Caco-2 (cell line): ENCODE measurements at regions of chr6 and their contacts with region 1.

Region 1: GRCh38 chr6:52284460-52285176 is at the start of gene MCM3:
- DNase-seq: peak; percentile 97 to 99
- H3K4me3 ChIP-seq: peak within 1 kb of the TSS; percentile 87
- H3K4me3 Mint-ChIP-seq: no peak within 1 kb of the TSS
- H3K27ac Mint-ChIP-seq: no peak within 1 kb of the TSS
- H3K4me1 ChIP-seq: 0 out of 2 replicates have a peak, but pooled peaks cover 6% of the 10 kb centered on the region
- H3K4me1 Mint-ChIP-seq: no peaks in the 10 kb centered on the region
- H3K27me3 ChIP-seq: no peaks in the 10 kb centered on the region
- H3K27me3 Mint-ChIP-seq: no peaks in the 10 kb centered on the region
- CTCF ChIP-seq: no peak
- total RNA-seq, gene MCM3: 151 and 152 TPM in 2 replicates

Region 2: DNA sequence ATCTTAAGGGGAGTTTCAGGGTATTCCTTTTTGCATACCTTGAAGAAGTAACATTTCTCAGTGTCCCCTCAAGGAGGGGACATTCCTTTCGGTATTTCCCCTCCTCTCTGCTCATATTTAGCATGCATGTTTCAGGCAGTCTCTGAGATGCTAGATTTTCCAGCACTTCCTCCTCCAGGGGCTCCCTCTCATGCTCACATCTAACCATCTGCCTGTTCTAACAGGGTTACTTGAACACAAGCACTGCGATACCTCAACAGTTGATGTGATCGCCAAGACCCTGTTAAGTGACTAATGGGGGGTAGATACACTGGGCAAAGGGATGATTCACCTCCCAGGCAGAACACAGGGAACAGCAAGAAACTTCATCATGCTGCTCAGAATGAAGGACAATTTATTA is 12.8 kb after region 1 on chr6:
- CTCF ChIA-PET with region 1: interaction called, 3 read pairs
- POLR2A ChIA-PET with region 1: interaction called, 3 read pairs
- intact Hi-C with region 1: loop called (anchors 1 kb)
- DNase-seq: no peak
- H3K4me3 ChIP-seq: no peak overlapping the region
- H3K4me3 Mint-ChIP-seq: no peak overlapping the region
- H3K27ac Mint-ChIP-seq: peak overlapping the region; percentile 11
- H3K4me1 ChIP-seq: no peaks in the 10 kb centered on the region
- H3K4me1 Mint-ChIP-seq: peaks cover 15% of the 10 kb centered on the region
- H3K27me3 ChIP-seq: no peaks in the 10 kb centered on the region
- H3K27me3 Mint-ChIP-seq: no peaks in the 10 kb centered on the region
- CTCF ChIP-seq: no peak

Region 3: GRCh38 chr6:52325695-52326441 is 41.2 kb after region 1 on chr6:
- CTCF ChIA-PET with region 1: no interaction called
- POLR2A ChIA-PET with region 1: interaction called, 6 read pairs
- intact Hi-C with region 1: loop called (anchors 1 kb)
- DNase-seq: peak; percentile 85 to 91
- H3K4me3 ChIP-seq: no peak overlapping the region
- H3K4me3 Mint-ChIP-seq: peak overlapping the region; percentile 28
- H3K27ac Mint-ChIP-seq: peak overlapping the region; percentile 88
- H3K4me1 ChIP-seq: peaks cover 62% of the 10 kb centered on the region
- H3K4me1 Mint-ChIP-seq: peaks cover 63% of the 10 kb centered on the region
- H3K27me3 ChIP-seq: no peaks in the 10 kb centered on the region
- H3K27me3 Mint-ChIP-seq: no peaks in the 10 kb centered on the region
- CTCF ChIP-seq: no peak

Region 4: GRCh38 chr6:52361945-52362442 is 77.4 kb after region 1 on chr6 and contains the start of gene PAQR8:
- CTCF ChIA-PET with region 1: interaction called, 4 read pairs
- POLR2A ChIA-PET with region 1: interaction called, 8 read pairs
- intact Hi-C with region 1: loop called (anchors 1 kb)
- DNase-seq: peak; percentile 47 to 81
- H3K4me3 ChIP-seq: peak within 1 kb of the TSS; percentile 93
- H3K4me3 Mint-ChIP-seq: peak within 1 kb of the TSS; percentile 74
- H3K27ac Mint-ChIP-seq: peak within 1 kb of the TSS; percentile 75
- H3K4me1 ChIP-seq: peaks cover 26% of the 10 kb centered on the region
- H3K4me1 Mint-ChIP-seq: no peaks in the 10 kb centered on the region
- H3K27me3 ChIP-seq: no peaks in the 10 kb centered on the region
- H3K27me3 Mint-ChIP-seq: no peaks in the 10 kb centered on the region
- CTCF ChIP-seq: no peak
- total RNA-seq, gene PAQR8: 8.7 and 10.0 TPM in 2 replicates

Region 5: DNA sequence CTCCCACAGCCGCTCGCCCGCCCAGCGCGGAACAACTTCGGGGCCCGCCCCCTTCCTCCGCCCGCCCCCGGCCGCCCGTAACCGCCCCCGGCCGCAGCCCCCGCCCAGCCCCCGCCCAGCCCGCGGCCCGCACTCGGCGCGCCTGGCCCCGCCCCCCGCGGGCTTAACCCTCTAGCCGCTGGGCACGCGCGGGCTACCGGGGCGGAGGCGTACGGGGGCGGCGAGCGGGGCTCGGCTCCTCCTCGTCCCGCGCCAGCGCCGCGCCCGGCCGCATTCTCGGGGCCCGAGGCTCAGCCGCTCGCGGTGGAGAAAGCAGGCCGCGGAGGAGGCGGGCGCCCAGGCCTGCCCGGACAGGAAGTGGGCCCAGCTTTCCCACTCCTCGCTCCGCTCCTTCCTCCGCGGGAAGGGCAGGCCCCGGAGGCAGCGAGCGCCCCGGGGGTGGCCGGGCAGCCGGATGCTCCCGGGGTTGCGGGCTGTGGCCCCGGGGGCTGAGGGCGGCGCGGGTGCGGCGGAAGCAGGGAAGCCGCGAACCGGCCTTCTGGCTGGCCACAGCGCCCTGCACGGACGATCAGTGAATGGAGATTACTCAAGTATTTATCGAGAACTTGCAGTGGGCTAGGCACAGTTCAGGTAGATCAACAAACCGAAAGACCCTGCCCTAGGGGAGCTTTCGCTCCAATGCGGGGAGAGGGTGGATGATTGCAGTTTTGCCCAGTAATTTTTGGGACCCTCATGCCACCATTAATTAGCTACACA is 292.6 kb after region 1 on chr6 and contains the start of gene TRAM2:
- CTCF ChIA-PET with region 1: no interaction called
- POLR2A ChIA-PET with region 1: no interaction called
- intact Hi-C with region 1: loop called (anchors 10 kb)
- DNase-seq: peak; percentile 87 to 93
- H3K4me3 ChIP-seq: peak within 1 kb of the TSS; percentile 80
- H3K4me3 Mint-ChIP-seq: peak within 1 kb of the TSS; percentile 81
- H3K27ac Mint-ChIP-seq: peak within 1 kb of the TSS; percentile 81
- H3K4me1 ChIP-seq: peaks cover 60% of the 10 kb centered on the region
- H3K4me1 Mint-ChIP-seq: peaks cover 48% of the 10 kb centered on the region
- H3K27me3 ChIP-seq: no peaks in the 10 kb centered on the region
- H3K27me3 Mint-ChIP-seq: no peaks in the 10 kb centered on the region
- CTCF ChIP-seq: no peak
- total RNA-seq, gene TRAM2: 63.8 and 71.6 TPM in 2 replicates